ENCODE measurements at regions of chr6 and their contacts with region 1.

Region 1: GRCh38 chr6:43629505-43630300 is 639 bp upstream of the GTPBP2 start:
- DNase-seq: peak; percentile 95
- ATAC-seq: peak; percentile 66
- H3K4me3 ChIP-seq: peak overlapping the region; percentile 64 to 96 (median 90)
- H3K4me3 Mint-ChIP-seq: peak overlapping the region; percentile 100
- H3K27ac ChIP-seq: peak overlapping the region; percentile 70 to 84
- H3K27ac Mint-ChIP-seq: peak overlapping the region; percentile 99
- H3K4me1 ChIP-seq: peaks cover 22 to 33% of the 10 kb centered on the region in 2 donors
- H3K4me1 Mint-ChIP-seq: peaks cover 32% of the 10 kb centered on the region
- H3K27me3 ChIP-seq: no peaks in the 10 kb centered on the region
- H3K27me3 Mint-ChIP-seq: no peaks in the 10 kb centered on the region
- CTCF ChIP-seq: no peak

Region 2: GRCh38 chr6:43247113-43247999 is 382.3 kb before region 1 on chr6:
- CTCF ChIA-PET with region 1: no interaction called
- POLR2A ChIA-PET with region 1: no interaction called
- intact Hi-C with region 1: loop called (anchors 2 kb)
- DNase-seq: peak; percentile 87
- ATAC-seq: peak; percentile 96
- H3K4me3 ChIP-seq: peak overlapping the region; percentile 51 to 85 (median 72)
- H3K4me3 Mint-ChIP-seq: no peak overlapping the region
- H3K27ac ChIP-seq: peak overlapping the region; percentile 51 to 65
- H3K27ac Mint-ChIP-seq: peak overlapping the region; percentile 87
- H3K4me1 ChIP-seq: peaks cover 19 to 21% of the 10 kb centered on the region in 2 donors
- H3K4me1 Mint-ChIP-seq: peaks cover 22% of the 10 kb centered on the region
- H3K27me3 ChIP-seq: peaks cover 0 to 62% (median 38%) of the 10 kb centered on the region in 4 experiments
- H3K27me3 Mint-ChIP-seq: peaks cover 29% of the 10 kb centered on the region
- CTCF ChIP-seq: no peak

Region 3: GRCh38 chr6:43376551-43376981 is 253.1 kb before region 1 on chr6:
- CTCF ChIA-PET with region 1: no interaction called
- POLR2A ChIA-PET with region 1: no interaction called
- intact Hi-C with region 1: no loop called
- DNase-seq: no peak
- ATAC-seq: no peak
- H3K4me3 ChIP-seq: no peak overlapping the region
- H3K4me3 Mint-ChIP-seq: no peak overlapping the region
- H3K27ac ChIP-seq: no peak overlapping the region
- H3K27ac Mint-ChIP-seq: peak overlapping the region; percentile 68
- H3K4me1 ChIP-seq: peaks cover 84% of the 10 kb centered on the region in 2 donors
- H3K4me1 Mint-ChIP-seq: peaks cover 67% of the 10 kb centered on the region
- H3K27me3 ChIP-seq: peaks cover 0 to 4% (median under 1%) of the 10 kb centered on the region in 4 experiments
- H3K27me3 Mint-ChIP-seq: peaks cover 12% of the 10 kb centered on the region
- CTCF ChIP-seq: no peak

Region 4: DNA sequence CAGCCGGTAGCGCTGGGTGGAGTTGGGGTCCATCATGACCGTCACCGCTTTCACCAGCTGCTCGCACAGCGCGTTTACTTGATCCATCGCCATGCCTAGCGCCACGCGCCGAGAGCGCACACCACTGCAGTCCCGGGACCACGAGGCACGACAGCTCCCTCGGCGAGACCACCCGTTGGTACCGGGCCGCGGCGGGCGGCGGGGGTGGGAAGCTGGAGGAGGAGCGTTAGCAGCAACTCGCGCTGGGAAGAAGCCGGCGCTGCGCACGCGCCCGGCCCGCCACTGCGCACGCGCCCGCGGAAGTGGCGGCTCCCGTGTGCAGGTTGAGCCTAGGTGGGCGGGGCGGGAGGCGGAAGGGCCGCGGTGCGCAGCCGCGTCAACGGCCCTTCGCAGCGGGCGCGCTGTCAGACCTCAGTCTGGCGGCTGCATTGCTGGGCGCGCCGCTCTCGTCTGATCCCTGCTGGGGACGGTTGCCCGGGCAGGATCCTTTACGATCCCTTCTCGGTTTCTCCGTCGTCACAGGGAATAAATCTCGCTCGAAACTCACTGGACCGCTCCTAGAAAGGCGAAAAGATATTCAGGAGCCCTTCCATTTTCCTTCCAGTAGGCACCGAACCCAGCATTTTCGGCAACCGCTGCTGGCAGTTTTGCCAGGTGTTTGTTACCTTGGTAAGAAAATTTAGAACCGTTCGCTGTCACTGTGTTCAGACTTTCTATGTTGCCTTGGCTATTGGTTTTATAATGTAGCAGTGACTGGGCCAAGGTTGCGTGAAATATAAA is 53.7 kb before region 1 on chr6 and contains the starts of genes POLH and XPO5:
- CTCF ChIA-PET with region 1: interaction called, 5 read pairs
- POLR2A ChIA-PET with region 1: interaction called, 4 read pairs
- intact Hi-C with region 1: loop called (anchors 2 kb)
- DNase-seq: peak; percentile 95
- ATAC-seq: peak; percentile 94
- H3K4me3 ChIP-seq: peak within 1 kb of the TSS; percentile 81 to 99 (median 98)
- H3K4me3 Mint-ChIP-seq: peak within 1 kb of the TSS; percentile 94
- H3K27ac ChIP-seq: peak within 1 kb of the TSS; percentile 49 to 80
- H3K27ac Mint-ChIP-seq: peak within 1 kb of the TSS; percentile 91
- H3K4me1 ChIP-seq: peaks cover 28 to 40% of the 10 kb centered on the region in 2 donors
- H3K4me1 Mint-ChIP-seq: peaks cover 36% of the 10 kb centered on the region
- H3K27me3 ChIP-seq: no peaks in the 10 kb centered on the region
- H3K27me3 Mint-ChIP-seq: no peaks in the 10 kb centered on the region
- CTCF ChIP-seq: no peak
- total RNA-seq, gene POLH: 24.8 and 26.4 TPM in 2 replicates
- total RNA-seq, gene XPO5: 45.7 and 48.1 TPM in 2 replicates

Region 5: GRCh38 chr6:43644931-43645612 is 15.4 kb after region 1 on chr6 and contains the start of gene RSPH9:
- CTCF ChIA-PET with region 1: interaction called, 5 read pairs
- POLR2A ChIA-PET with region 1: interaction called, 9 read pairs
- intact Hi-C with region 1: loop called (anchors 1 kb)
- DNase-seq: peak; percentile 74
- ATAC-seq: peak; percentile 91
- H3K4me3 ChIP-seq: peak within 1 kb of the TSS; percentile 53 to 74 (median 57)
- H3K4me3 Mint-ChIP-seq: peak within 1 kb of the TSS; percentile 93
- H3K27ac ChIP-seq: peak within 1 kb of the TSS in 1 of 2 donors; percentile 51
- H3K27ac Mint-ChIP-seq: peak within 1 kb of the TSS; percentile 66
- H3K4me1 ChIP-seq: peaks cover 4 to 12% of the 10 kb centered on the region in 2 donors
- H3K4me1 Mint-ChIP-seq: peaks cover 20% of the 10 kb centered on the region
- H3K27me3 ChIP-seq: no peaks in the 10 kb centered on the region
- H3K27me3 Mint-ChIP-seq: no peaks in the 10 kb centered on the region
- CTCF ChIP-seq: no peak
- total RNA-seq, gene RSPH9: 0.15 TPM in 1 of 2 replicates, not detected in the other

Region 6: GRCh38 chr6:43695215-43695966 is 65.7 kb after region 1 on chr6:
- CTCF ChIA-PET with region 1: no interaction called
- POLR2A ChIA-PET with region 1: no interaction called
- intact Hi-C with region 1: no loop called
- DNase-seq: no peak
- ATAC-seq: no peak
- H3K4me3 ChIP-seq: no peak overlapping the region
- H3K4me3 Mint-ChIP-seq: no peak overlapping the region
- H3K27ac ChIP-seq: no peak overlapping the region
- H3K27ac Mint-ChIP-seq: no peak overlapping the region
- H3K4me1 ChIP-seq: no peaks in the 10 kb centered on the region
- H3K4me1 Mint-ChIP-seq: no peaks in the 10 kb centered on the region
- H3K27me3 ChIP-seq: peaks cover 0 to 17% (median 0%) of the 10 kb centered on the region in 4 experiments
- H3K27me3 Mint-ChIP-seq: peaks cover 16% of the 10 kb centered on the region
- CTCF ChIP-seq: no peak

Region 7: GRCh38 chr6:44257025-44257752 is 627.5 kb after region 1 on chr6 and contains the start of gene SLC35B2:
- CTCF ChIA-PET with region 1: no interaction called
- POLR2A ChIA-PET with region 1: no interaction called
- intact Hi-C with region 1: loop called (anchors 5 kb)
- DNase-seq: peak; percentile 87
- ATAC-seq: peak; percentile 64
- H3K4me3 ChIP-seq: peak within 1 kb of the TSS; percentile 35 to 93 (median 90)
- H3K4me3 Mint-ChIP-seq: peak within 1 kb of the TSS; percentile 88
- H3K27ac ChIP-seq: peak within 1 kb of the TSS; percentile 83 to 98
- H3K27ac Mint-ChIP-seq: peak within 1 kb of the TSS; percentile 100
- H3K4me1 ChIP-seq: peaks cover 57 to 81% of the 10 kb centered on the region in 2 donors
- H3K4me1 Mint-ChIP-seq: peaks cover 89% of the 10 kb centered on the region
- H3K27me3 ChIP-seq: no peaks in the 10 kb centered on the region
- H3K27me3 Mint-ChIP-seq: no peaks in the 10 kb centered on the region
- CTCF ChIP-seq: peak; percentile 75
- total RNA-seq, gene SLC35B2: 29.2 and 30.0 TPM in 2 replicates